ENCODE measurements at regions of chr3 and their contacts with region 1.

Region 1: DNA sequence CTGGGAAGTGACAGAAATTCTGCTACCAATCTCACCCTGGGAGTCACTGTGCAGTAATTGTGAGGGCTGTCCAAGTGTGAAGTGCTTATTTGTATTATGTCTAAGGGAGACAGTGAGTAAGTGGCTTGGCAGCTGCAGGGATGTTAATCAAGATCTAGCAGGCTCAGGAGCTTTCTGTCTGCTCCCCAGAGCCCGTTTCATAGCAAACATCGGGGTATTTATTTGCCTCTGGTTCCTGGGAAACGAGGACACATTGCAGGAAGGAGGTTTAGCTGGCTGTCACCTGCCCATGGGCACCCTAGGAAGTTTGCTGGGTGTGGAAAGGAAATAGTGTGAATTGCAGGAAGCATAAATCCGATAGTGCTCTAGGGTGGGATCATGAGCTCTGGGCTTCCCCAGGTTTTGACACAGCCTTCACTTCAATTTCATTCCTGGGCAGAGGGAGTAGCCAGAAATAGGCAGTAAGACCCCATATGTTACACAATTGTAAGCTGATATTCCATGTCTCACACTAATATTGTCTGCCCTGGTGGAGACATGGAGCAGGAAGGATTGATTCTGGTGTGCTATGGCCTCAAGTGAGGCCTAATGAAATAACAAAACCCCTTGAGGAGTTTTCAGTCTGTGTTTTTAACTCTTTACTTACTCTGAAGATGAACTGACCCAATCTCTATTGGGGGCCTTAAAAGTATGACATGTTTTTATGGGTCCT is 74.1 kb upstream of the MITF start:
- DNase-seq: peak in 1 of 2 donors; percentile 61
- ATAC-seq: peak; percentile 73 to 94 (median 91)
- H3K4me3 ChIP-seq: no peak overlapping the region
- H3K27ac ChIP-seq: peak overlapping the region in 8 of 10 donors; percentile 14 to 67 (median 38)
- H3K4me1 ChIP-seq: peaks cover 0 to 27% (median 19%) of the 10 kb centered on the region in 9 donors
- H3K27me3 ChIP-seq: no peaks in the 10 kb centered on the region
- CTCF ChIP-seq: no peak

Region 2: GRCh38 chr3:69439643-69440270 is 225.4 kb before region 1 on chr3:
- intact Hi-C with region 1: loop called in 9 of 10 experiments (anchors 5 to 10 kb)
- DNase-seq: peak in 1 of 2 donors; percentile 13
- ATAC-seq: peak in 5 of 8 donors; percentile 11 to 49 (median 39)
- H3K4me3 ChIP-seq: peak overlapping the region in 4 of 10 donors; percentile 12 to 33 (median 20)
- H3K27ac ChIP-seq: peak overlapping the region in 1 of 10 donors; percentile 54
- H3K4me1 ChIP-seq: peaks cover 0 to 22% (median 0%) of the 10 kb centered on the region in 9 donors
- H3K27me3 ChIP-seq: no peaks in the 10 kb centered on the region
- CTCF ChIP-seq: peak in 8 of 9 donors; percentile 39 to 73 (median 68)

Region 3: GRCh38 chr3:69542221-69543079 is 122.7 kb before region 1 on chr3:
- intact Hi-C with region 1: loop called in 4 of 10 experiments (anchors 5 to 10 kb)
- DNase-seq: peak in 1 of 2 donors; percentile 35
- ATAC-seq: peak; percentile 47 to 87 (median 68)
- H3K4me3 ChIP-seq: peak overlapping the region; percentile 41 to 81 (median 67)
- H3K27ac ChIP-seq: peak overlapping the region in 8 of 10 donors; percentile 2 to 72 (median 54)
- H3K4me1 ChIP-seq: peaks cover 0 to 35% (median 14%) of the 10 kb centered on the region in 9 donors
- H3K27me3 ChIP-seq: peaks cover 0 to 35% (median 13%) of the 10 kb centered on the region in 7 donors
- CTCF ChIP-seq: no peak

Region 4: DNA sequence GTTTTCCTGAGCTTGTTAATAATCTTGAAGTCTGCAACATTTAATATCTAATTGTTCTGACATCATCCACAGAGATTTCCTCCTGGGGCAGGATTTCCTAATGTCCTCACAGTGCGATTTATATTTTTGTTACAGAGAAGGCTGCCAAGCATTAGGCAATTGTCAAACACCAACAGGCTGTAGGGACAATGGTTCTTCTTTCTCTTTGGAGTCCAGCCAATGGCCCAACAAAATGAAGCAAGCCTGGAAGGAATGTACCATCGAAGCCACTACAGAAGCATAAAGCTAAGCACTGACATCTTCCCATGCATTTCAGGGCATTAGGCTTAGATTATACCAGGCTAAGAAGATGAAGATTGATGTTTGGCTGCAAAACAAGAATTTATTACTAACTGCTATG is 106.3 kb before region 1 on chr3:
- intact Hi-C with region 1: loop called in 2 of 10 experiments (anchors 5 kb)
- DNase-seq: peak in 1 of 2 donors; percentile 73
- ATAC-seq: peak; percentile 71 to 95 (median 85)
- H3K4me3 ChIP-seq: no peak overlapping the region
- H3K27ac ChIP-seq: peak overlapping the region in 1 of 10 donors; percentile 5
- H3K4me1 ChIP-seq: peaks cover 0 to 41% (median 21%) of the 10 kb centered on the region in 9 donors
- H3K27me3 ChIP-seq: no peaks in the 10 kb centered on the region
- CTCF ChIP-seq: no peak

Region 5: DNA sequence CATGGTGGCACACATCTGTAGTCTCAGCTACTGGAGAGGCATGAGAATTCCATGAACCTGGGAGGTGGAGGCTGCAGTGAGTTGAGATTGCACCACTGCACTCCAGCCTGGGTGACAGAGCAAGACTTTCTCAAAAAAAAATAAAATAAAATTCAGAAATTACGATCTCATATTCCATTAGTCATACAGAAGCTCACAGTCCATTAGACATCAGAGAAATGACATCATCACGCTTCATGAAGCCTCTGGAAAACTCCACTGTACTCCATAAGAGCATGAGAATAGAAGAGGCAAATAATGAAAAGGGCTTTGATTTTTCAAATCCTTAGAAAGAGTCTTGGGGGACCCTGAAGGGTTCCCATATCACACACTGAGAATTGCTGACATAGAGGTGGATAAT is 70.9 kb before region 1 on chr3:
- intact Hi-C with region 1: no loop called
- DNase-seq: no peak
- ATAC-seq: no peak
- H3K4me3 ChIP-seq: no peak overlapping the region
- H3K27ac ChIP-seq: no peak overlapping the region
- H3K4me1 ChIP-seq: no peaks in the 10 kb centered on the region
- H3K27me3 ChIP-seq: no peaks in the 10 kb centered on the region
- CTCF ChIP-seq: no peak